PC-9 (cell line): ENCODE measurements at regions of chr1 and their contacts with region 1.

Region 1: DNA sequence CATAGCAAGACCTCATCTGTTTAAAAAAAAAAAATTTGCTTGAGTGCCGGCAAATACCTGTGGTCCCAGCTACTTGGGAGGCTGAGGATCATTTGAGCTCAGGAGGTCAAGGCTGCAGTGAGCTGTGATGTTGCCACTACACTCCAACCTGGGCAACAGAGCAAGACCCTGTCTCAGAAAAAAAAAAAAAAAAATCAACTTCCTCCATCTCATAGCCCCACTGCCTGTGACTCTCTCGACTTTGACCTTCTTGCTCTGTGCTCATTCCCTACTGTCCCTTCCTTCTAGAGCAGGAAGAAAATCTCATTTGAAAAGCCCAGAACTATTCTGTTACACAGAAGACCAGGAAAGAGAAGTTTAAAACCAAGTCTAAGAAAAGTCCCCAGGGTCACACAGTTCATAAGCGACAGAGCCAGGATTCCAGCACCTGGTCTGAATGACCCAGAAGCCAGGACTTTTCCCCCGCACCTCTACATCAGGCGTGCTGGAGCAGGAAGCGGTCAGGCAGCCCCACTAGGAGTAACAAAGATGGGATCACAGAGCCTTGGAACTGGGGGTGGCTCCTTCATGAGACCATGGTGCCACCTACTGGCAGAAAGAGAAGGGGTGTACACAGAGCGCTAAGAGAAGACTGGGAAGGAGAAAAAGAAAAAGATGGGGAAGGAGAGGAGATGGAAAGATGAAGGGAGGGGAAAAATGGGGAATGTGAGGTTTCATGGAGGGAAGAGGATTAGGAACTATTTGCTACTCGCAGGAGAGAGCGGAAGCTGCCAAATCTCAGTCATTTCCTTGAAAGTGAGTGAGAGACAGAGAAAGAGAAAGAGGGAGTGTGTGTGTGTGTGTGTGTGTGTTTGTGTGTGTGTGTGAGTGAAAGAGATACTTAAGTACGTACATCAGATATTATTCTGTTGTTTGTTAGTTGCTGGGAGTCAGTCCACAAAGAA is 3.1 kb upstream of the P3R3URF start:
- DNase-seq: peak; percentile 74 to 88
- H3K4me3 ChIP-seq: peak overlapping the region; percentile 83; the same call in 1 of the 2 replicates
- H3K27ac ChIP-seq: peak overlapping the region; percentile 91
- H3K4me1 ChIP-seq: peaks cover 65% of the 10 kb centered on the region
- H3K27me3 ChIP-seq: no peaks in the 10 kb centered on the region
- CTCF ChIP-seq: peak; percentile 95

Region 2: GRCh38 chr1:45643978-45644377 is 535.4 kb before region 1 on chr1:
- CTCF ChIA-PET with region 1: no interaction called
- POLR2A ChIA-PET with region 1: interaction called, 4 read pairs
- intact Hi-C with region 1: loop called (anchors 1 kb)
- DNase-seq: peak in 1 of 2 experiments; percentile 65
- H3K4me3 ChIP-seq: no peak overlapping the region
- H3K27ac ChIP-seq: peak overlapping the region; percentile 62
- H3K4me1 ChIP-seq: no peaks in the 10 kb centered on the region; the same call in 1 of the 2 replicates
- H3K27me3 ChIP-seq: no peaks in the 10 kb centered on the region
- CTCF ChIP-seq: peak; percentile 53; the same call in 1 of the 2 replicates

Region 3: DNA sequence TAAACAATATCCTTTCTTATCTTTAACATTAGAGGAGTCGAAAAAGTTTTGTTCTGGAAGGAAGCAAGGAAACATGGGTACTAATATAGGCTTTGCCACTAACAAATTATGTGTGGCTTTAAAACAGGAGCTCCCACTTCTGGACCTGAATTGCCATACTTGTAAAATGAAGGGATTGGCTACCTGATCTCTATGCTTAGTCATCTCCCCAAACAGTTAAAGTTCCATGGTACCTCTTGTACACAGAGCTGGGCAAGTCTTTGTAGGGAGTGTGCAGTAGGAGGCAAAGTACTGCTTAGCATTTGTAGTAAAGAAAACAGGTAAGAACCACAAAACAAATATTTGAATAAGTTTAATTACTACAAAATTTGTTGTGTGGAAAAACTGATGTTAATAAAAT is 294.7 kb before region 1 on chr1:
- CTCF ChIA-PET with region 1: interaction called, 6 read pairs
- POLR2A ChIA-PET with region 1: no interaction called
- intact Hi-C with region 1: loop called (anchors 1 kb)
- DNase-seq: peak; percentile 9 to 37
- H3K4me3 ChIP-seq: no peak overlapping the region
- H3K27ac ChIP-seq: no peak overlapping the region
- H3K4me1 ChIP-seq: no peaks in the 10 kb centered on the region; the same call in 1 of the 2 replicates
- H3K27me3 ChIP-seq: no peaks in the 10 kb centered on the region
- CTCF ChIP-seq: no peak

Region 4: DNA sequence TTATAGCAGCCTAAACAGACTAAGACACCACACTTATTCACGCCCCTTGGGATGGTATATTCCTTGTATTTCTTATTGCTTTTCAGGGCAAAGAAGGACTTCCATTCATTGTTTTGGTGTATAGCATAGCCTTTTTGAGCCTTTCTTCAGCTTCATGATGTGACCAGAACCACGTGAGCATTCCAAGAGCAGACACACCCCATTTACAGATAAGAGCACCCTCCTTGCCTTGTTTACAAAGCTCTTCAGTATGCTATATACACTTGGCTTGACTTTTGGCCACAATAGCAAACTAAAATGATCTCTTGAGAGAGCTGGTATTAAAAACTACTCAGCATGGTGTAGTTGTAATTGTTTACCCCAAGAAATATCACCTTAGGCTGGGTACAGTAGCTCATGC is 125.7 kb before region 1 on chr1:
- CTCF ChIA-PET with region 1: no interaction called
- POLR2A ChIA-PET with region 1: interaction called, 23 read pairs
- intact Hi-C with region 1: no loop called
- DNase-seq: no peak
- H3K4me3 ChIP-seq: no peak overlapping the region
- H3K27ac ChIP-seq: peak overlapping the region; percentile 10; the same call in 1 of the 2 replicates
- H3K4me1 ChIP-seq: 0 out of 2 replicates have a peak, but pooled peaks cover 5% of the 10 kb centered on the region
- H3K27me3 ChIP-seq: no peaks in the 10 kb centered on the region
- CTCF ChIP-seq: no peak

Region 5: GRCh38 chr1:46152016-46152415 is 27.4 kb before region 1 on chr1:
- CTCF ChIA-PET with region 1: no interaction called
- POLR2A ChIA-PET with region 1: no interaction called
- intact Hi-C with region 1: no loop called
- DNase-seq: no peak
- H3K4me3 ChIP-seq: no peak overlapping the region
- H3K27ac ChIP-seq: no peak overlapping the region
- H3K4me1 ChIP-seq: peaks cover 8% of the 10 kb centered on the region; the same call in 1 of the 2 replicates
- H3K27me3 ChIP-seq: no peaks in the 10 kb centered on the region
- CTCF ChIP-seq: no peak

Region 6: DNA sequence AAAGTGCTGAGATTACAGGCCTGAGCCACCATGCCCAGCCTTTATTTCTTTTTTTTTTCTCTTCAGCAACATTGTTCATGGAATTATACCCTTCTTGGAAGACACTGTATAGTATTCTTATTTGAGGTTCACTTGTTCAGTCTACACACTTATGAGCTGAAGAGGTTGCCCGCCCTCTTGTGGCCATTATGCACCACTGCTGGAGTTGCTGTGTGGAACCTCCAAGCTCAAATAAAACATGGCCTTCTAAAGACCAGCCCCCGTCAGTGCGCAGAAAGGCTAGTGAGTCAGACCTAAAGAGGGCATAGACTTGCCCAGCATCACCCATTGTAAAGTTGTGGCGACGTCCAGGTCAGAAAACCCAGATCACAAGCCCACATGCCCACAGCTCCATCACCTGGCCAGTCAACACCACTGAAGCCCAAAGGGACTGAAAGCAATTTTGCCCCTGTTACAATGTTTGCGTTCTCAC is 44.1 kb after region 1 on chr1:
- CTCF ChIA-PET with region 1: interaction called, 58 read pairs
- POLR2A ChIA-PET with region 1: interaction called, 20 read pairs
- intact Hi-C with region 1: loop called (anchors 1 kb)
- DNase-seq: peak; percentile 81 to 87
- H3K4me3 ChIP-seq: no peak overlapping the region
- H3K27ac ChIP-seq: no peak overlapping the region
- H3K4me1 ChIP-seq: peaks cover 5% of the 10 kb centered on the region
- H3K27me3 ChIP-seq: no peaks in the 10 kb centered on the region
- CTCF ChIP-seq: peak; percentile 97

Region 7: GRCh38 chr1:46413596-46413985 is 234.2 kb after region 1 on chr1:
- CTCF ChIA-PET with region 1: no interaction called
- POLR2A ChIA-PET with region 1: no interaction called
- intact Hi-C with region 1: no loop called
- DNase-seq: no peak
- H3K4me3 ChIP-seq: no peak overlapping the region
- H3K27ac ChIP-seq: no peak overlapping the region
- H3K4me1 ChIP-seq: no peaks in the 10 kb centered on the region
- H3K27me3 ChIP-seq: no peaks in the 10 kb centered on the region
- CTCF ChIP-seq: 0 out of 2 replicates have a peak, but pooled peaks have one; percentile 41